Lower lobe of right lung (tissue), 2 donors: ENCODE measurements at regions of chr3 and their contacts with region 1.

Region 1: GRCh38 chr3:102229062-102229655 is 205.7 kb upstream of the ZPLD1 start:
- DNase-seq: peak; percentile 59
- ATAC-seq: peak; percentile 73 to 85
- H3K4me3 ChIP-seq: no peak overlapping the region
- H3K27ac ChIP-seq: no peak overlapping the region
- H3K4me1 ChIP-seq: peaks cover 8% of the 10 kb centered on the region
- H3K27me3 ChIP-seq: no peaks in the 10 kb centered on the region
- CTCF ChIP-seq: peak; percentile 97

Region 2: DNA sequence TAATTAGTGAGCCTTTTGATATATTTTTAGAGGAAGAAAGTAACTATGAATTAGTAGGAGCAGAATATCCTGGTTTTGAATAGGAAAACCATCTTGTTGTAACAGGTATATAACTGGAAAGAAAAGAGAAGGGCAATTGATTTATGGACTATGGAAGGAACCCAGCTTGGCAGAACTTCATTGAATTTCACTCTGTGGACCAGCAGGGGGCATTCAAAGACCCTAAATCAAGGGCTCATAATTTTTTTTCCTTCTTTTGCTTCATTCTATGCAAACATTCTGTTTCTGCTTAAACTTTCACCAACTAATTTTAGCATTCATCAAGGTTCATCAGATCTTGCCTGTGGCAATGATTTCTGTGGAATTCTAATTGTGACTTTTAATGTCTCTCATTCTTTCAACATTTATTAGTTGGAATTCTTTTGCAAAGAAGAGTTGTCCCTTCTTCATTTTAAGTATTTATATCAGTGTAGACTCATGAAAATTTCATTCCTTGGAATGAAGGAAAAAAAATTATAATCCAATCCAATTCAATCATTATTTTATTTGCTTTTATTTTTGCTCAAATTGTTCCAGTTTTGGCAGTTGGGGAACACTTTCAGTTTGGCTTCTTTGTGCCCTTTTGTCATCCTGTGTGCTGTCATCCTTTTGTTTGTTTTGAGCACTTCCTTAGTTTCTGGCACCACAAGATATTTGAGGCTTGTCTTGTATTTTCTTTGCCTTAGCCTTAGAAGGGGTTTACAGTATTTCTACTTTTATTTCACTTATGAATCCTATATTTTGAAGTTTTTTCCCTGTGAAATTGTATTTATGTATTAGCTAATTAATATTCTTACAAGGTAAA is 419.8 kb before region 1 on chr3:
- intact Hi-C with region 1: loop called (anchors 5 kb)
- DNase-seq: no peak
- ATAC-seq: peak; percentile 71 to 73
- H3K4me3 ChIP-seq: no peak overlapping the region
- H3K27ac ChIP-seq: peak overlapping the region; percentile 61
- H3K4me1 ChIP-seq: peaks cover 26% of the 10 kb centered on the region
- H3K27me3 ChIP-seq: no peaks in the 10 kb centered on the region
- CTCF ChIP-seq: peak; percentile 69

Region 3: DNA sequence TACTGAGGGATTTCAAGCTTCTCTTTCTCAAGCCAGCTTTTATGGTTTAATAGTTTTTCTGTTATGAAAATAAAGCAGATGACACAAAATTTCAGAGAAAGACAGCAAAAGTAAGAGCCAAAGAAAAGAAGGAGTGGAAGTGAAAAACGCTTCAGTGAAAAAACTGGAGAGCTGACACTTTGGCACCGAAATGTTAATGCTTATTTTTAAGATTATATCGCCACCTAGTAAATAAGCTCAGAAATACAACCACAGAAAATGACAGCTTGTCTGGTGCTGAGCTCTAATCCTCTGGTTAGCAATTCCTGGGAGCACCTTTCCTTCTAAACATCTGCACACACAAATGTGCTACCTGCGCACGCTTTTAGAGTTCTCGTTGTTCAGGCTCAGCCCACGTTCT is 307.3 kb after region 1 on chr3:
- intact Hi-C with region 1: loop called (anchors 5 kb)
- DNase-seq: no peak
- ATAC-seq: peak; percentile 21 to 61
- H3K4me3 ChIP-seq: no peak overlapping the region
- H3K27ac ChIP-seq: no peak overlapping the region
- H3K4me1 ChIP-seq: no peaks in the 10 kb centered on the region
- H3K27me3 ChIP-seq: no peaks in the 10 kb centered on the region
- CTCF ChIP-seq: peak; percentile 38